ENCODE measurements at regions of chr6 and their contacts with region 1.

Region 1: DNA sequence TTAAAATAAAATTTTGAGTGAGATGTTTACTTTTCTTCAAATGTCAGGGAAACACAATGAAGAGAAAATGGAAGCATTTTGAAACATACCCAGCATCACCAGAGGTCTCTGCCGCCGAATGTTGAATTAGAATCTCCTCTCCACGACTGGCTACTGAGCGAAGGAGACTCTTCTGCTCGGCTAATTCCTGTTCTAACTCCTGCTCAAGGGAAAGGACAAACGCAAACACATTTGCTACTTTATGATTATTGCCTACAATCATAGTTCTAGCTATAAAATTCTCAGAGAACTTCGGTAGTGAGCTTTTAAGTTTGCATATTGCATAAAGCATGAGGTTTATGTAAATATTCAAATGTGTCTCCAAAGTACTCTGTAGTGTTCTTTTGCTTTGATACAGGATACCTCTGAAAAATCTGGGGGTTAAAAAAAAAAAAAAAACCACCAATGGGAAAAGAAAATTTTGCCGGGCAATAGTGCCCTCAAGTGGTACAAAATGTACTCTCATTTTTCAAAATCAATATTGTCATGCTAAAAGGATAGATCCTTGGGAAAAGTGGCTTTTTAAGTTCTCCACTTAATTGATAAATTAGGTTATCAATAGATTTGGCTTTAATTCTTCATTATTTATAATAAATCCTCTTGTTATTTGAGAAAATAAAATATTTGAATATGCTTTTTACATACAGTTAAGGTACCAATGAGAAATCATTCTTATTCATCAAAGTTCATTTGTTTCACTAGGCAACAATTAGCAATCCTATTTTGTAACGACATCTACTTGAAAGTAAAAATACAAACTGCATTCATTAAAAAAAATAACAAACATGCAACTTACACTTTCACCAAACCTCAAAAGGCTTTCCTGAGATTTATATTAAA is 369.0 kb downstream of the SYNE1 start:
- ATAC-seq: peak in 3 of 8 experiments; percentile 42 to 96 (median 49)
- H3K4me3 ChIP-seq: no peak overlapping the region
- H3K27ac ChIP-seq: no peak overlapping the region
- H3K4me1 ChIP-seq: no peaks in the 10 kb centered on the region

Region 2: DNA sequence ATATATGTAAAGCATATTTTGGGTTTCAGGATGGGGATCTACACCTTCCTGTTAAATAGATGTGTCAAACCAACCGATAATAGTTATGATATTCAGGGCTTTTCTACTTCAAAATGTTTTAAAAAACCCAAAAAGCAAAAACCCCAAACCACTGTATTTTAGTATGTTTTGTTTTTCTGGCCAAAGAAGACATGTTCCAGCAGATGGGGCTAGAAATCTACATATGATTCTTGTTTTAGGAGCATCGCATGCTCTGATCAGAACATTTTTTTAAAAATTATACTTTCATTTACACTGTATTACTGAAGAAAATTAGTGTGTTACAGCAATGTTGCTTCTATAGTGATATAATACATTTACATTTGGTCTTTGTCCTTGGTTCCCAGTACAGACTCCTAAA is 827.3 kb before region 1 on chr6:
- in situ Hi-C with region 1: loop called in 1 of 9 experiments (anchors 25 kb)
- ATAC-seq: no peak
- H3K4me3 ChIP-seq: no peak overlapping the region
- H3K27ac ChIP-seq: no peak overlapping the region
- H3K4me1 ChIP-seq: peaks cover 0 to 6% of the 10 kb centered on the region in 2 donors

Region 3: DNA sequence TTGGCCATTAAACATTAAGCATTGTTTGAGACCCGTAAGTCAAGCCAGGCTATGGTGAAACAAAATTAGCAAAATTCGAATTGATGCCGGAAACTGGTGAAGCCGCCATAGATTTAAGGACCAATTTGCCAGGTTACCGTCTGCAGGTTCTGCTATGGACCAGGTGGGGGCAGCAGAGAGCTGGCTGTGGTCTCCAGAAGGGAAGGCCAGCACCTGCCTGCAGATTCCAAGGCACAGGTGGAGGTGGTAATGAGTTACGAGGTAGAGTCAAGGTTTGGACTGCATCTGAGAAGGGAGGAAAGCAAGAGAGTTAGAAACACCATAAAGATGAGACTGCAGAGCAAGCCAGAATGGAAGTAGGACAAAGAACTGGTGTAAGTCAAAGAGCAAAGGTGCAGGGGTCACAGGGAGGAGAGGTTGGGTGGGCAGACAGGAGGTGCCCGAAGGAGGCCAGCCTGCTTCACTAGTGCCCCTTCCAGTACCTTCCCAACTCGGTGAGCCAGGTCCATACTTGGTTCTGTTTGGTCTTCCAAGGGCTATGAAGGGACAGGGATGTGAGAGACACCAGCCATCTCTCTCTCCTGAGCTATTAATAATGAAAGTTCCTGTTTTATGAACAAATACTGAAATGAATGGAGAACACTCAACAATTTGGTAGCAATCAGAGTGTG is 592.3 kb before region 1 on chr6:
- in situ Hi-C with region 1: loop called in 1 of 9 experiments (anchors 25 kb)
- ATAC-seq: peak in 3 of 8 experiments; percentile 31 to 66 (median 50)
- H3K4me3 ChIP-seq: no peak overlapping the region
- H3K27ac ChIP-seq: no peak overlapping the region
- H3K4me1 ChIP-seq: no peaks in the 10 kb centered on the region

Region 4: DNA sequence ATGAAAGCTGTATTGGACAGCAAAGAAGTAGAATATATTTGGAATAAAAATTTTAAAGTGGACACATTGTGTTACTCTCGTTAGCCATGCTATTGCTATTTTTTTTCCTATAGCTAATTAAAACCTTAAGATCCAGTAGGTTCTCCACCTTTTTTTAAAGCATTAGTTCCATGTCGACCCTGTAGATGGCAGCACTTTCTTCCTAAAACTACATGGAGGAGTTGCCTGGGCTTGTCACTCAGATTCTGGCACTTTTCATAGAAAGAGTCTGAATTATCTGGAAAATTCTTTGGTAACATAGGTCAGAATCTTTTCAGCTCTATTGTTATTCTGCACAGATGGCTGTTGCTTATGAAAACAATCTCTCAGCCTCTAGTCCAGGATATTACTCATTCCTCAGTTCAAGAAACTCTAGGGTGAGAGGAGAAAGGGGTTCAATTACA is 502.7 kb before region 1 on chr6:
- in situ Hi-C with region 1: loop called in 2 of 9 experiments (anchors 25 kb)
- ATAC-seq: peak in 7 of 8 experiments; percentile 3 to 58 (median 33)
- H3K4me3 ChIP-seq: no peak overlapping the region
- H3K27ac ChIP-seq: no peak overlapping the region
- H3K4me1 ChIP-seq: no peaks in the 10 kb centered on the region

Region 5: GRCh38 chr6:152124429-152125074 is 143.7 kb before region 1 on chr6:
- in situ Hi-C with region 1: loop called in 1 of 9 experiments (anchors 25 kb)
- ATAC-seq: peak in 4 of 8 experiments; percentile 27 to 68 (median 53)
- H3K4me3 ChIP-seq: no peak overlapping the region
- H3K27ac ChIP-seq: no peak overlapping the region
- H3K4me1 ChIP-seq: no peaks in the 10 kb centered on the region

Measured in motor neuron (in vitro differentiated cells).